ENCODE measurements at regions of chr3 and their contacts with region 1.

Region 1: GRCh38 chr3:50600841-50601591 is 10.6 kb downstream of the CISH start:
- DNase-seq: peak; percentile 92
- H3K4me3 Mint-ChIP-seq: peak overlapping the region; percentile 71
- H3K27ac Mint-ChIP-seq: peak overlapping the region; percentile 99
- H3K4me1 Mint-ChIP-seq: peaks cover 88% of the 10 kb centered on the region
- H3K27me3 Mint-ChIP-seq: no peaks in the 10 kb centered on the region

Region 2: DNA sequence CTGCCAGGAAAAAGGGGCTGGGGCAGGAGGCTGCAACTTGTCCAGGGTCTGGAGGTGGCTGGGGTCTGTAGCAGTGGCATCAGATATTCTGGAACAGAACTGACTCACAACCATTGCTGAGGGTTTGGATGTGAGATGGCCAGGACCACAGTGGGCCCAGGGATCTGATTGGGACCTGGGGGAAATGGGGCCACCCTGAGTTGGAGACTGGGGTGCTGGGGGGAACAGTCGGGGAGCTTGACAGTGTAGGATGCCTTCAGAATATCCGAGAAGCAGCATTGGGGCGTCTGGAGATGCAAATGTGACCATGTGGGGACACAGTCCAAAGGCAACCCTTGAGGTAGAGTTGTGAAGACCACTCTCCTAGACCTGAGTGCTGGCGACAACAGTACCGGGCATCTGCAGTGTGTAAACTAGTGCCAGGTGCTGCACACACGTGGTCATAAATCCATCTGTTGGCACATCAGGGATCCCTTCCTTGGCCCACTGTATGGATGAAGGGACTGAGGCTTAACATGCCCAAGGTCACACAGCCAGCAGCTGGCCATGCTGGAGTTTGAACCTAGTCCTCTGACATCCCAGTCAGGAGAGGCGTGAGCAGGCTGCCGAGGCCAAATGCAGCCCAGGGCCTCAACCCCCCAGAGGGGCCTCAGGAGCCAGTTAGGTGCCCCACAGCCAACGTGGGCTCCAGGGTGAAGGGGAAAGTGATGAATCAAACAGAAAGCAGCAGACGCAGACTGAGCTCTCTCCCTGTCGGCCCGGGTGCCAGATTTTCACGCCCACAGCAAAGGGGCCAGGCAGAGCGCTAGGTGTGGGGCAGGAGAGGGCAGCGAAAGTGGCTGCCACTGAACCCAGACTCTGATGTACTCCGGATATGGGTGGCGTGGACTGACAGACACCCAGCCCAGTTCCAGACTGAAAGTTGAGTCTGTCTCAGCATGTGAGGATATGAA is 12.9 kb before region 1 on chr3:
- CTCF ChIA-PET with region 1: interaction called, 854 read pairs
- POLR2A ChIA-PET with region 1: interaction called, 4,963 read pairs
- DNase-seq: peak; percentile 81
- H3K4me3 Mint-ChIP-seq: peak overlapping the region; percentile 6
- H3K27ac Mint-ChIP-seq: peak overlapping the region; percentile 96
- H3K4me1 Mint-ChIP-seq: peaks cover 78% of the 10 kb centered on the region
- H3K27me3 Mint-ChIP-seq: no peaks in the 10 kb centered on the region

Measured in activated CD4-positive, alpha-beta memory T cell treated with anti-CD3 and anti-CD28 coated beads, Interleukin-2, amount 10 ng/mL, durations not matched to agents 7 days and 5 days (primary cell).